AG04450 (cell line): ENCODE measurements at regions of chr2 and their contacts with region 1.

Region 1: DNA sequence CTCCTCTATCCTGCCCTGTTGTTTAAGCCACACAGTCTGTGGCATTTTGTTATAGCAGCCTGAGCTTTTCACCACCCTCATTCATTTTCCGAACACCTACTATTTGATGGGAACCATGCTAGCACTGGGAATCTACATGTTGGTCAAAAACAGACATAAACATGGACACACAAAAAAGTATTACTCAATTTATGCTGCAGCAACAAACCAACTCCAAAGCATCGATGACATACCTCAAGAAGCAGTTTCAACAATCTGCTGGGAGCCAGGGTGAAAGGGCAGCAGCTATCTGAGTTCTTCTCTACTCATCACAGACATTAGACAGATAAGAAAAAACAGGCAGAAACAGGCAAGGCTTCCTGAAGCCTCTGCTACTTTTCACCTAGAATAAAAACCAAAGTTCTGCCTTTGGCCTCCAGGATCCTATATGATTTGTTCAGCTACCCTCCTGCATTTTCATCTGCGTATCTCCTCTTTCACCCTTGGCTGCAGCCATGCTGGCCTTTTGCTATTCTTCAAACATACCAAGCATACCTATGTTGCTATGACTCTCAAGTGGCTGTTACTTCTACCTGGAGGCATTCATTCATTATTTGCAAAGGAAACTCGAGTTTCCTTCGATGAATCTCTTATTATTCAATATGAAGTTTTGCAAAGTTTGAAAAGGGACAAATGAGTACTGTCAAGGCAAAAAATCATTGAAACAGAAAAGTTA is 106.5 kb upstream of the HNMT start:
- DNase-seq: no peak
- H3K4me3 ChIP-seq: no peak overlapping the region
- H3K27ac ChIP-seq: no peak overlapping the region
- H3K27me3 ChIP-seq: no peaks in the 10 kb centered on the region
- CTCF ChIP-seq: no peak

Region 2: DNA sequence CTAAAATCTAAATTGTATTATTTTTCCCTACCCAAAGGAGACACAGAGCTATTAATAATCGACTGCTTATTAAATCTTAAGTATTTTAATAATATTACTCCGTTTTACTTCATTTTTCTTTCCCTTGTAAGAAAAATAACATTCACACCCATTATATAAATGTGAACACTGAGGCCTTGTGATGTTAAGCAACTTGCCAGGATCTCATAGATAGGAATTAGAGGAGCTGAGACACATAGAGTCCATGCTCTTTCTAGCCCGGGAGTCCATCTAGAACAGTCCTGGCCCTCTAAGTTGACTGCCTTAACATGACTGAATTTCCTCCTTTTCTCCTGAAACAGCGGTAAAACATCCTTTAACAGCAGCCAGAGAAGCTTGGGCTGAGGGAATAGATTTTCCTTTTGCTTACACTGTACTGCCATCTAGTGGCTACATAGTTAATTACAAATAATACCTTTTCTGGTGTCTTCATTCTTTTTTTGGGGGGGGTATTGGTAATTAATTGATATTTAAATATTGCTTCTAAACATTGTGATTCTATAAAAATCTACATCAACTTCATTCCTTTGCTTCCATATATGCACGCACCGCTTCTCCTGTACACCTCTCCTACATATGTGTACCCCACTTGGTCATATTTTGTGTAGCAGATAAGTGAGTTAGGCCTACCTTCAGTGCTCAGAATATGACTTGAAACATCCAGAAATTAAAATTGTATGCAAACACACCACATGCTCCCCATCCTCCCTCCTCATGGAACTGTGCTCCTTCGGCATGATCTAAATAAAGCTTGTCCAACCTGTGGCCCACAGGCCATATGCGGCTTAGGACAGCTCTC is 19.2 kb before region 1 on chr2:
- CTCF ChIA-PET with region 1: interaction called, 13 read pairs
- POLR2A ChIA-PET with region 1: no interaction called
- DNase-seq: peak; percentile 8
- H3K4me3 ChIP-seq: no peak overlapping the region
- H3K27ac ChIP-seq: no peak overlapping the region
- H3K27me3 ChIP-seq: no peaks in the 10 kb centered on the region
- CTCF ChIP-seq: peak; percentile 62

Region 3: DNA sequence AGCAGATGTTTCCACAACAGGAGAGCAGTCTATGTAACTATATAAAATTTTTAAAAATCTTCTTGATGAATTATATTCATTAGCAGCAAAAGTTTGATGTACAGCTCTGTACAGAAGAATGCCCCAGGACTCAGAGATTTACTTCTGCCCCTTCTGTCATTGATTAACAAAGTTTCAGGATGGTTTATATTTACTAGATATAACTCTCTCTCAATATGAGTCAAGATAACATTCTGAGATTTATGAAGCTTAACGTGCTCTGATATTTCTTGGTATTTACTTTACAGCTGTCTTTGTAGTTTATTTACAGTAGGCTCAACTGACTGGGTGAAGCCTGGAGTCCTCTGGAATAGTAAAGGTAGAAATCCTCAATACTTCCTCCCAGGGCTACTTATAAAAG is 13.0 kb after region 1 on chr2:
- CTCF ChIA-PET with region 1: no interaction called
- POLR2A ChIA-PET with region 1: no interaction called
- DNase-seq: no peak
- H3K4me3 ChIP-seq: no peak overlapping the region
- H3K27ac ChIP-seq: no peak overlapping the region
- H3K27me3 ChIP-seq: no peaks in the 10 kb centered on the region
- CTCF ChIP-seq: no peak